ENCODE measurements at regions of chr20 and their contacts with region 1.

Region 1: GRCh38 chr20:5735845-5736525 is 14.2 kb upstream of the SHLD1 start:
- DNase-seq: peak; percentile 49
- ATAC-seq: no peak
- H3K4me3 ChIP-seq: no peak overlapping the region
- H3K27ac ChIP-seq: peak overlapping the region; percentile 88; the same call in 1 of the 2 replicates
- H3K4me1 ChIP-seq: peaks cover 16% of the 10 kb centered on the region
- H3K27me3 ChIP-seq: peaks cover 1% of the 10 kb centered on the region; the same call in 1 of the 2 replicates
- CTCF ChIP-seq: no peak
- POLR2A ChIP-seq: no peak
- RAD21 ChIP-seq: no peak

Region 2: DNA sequence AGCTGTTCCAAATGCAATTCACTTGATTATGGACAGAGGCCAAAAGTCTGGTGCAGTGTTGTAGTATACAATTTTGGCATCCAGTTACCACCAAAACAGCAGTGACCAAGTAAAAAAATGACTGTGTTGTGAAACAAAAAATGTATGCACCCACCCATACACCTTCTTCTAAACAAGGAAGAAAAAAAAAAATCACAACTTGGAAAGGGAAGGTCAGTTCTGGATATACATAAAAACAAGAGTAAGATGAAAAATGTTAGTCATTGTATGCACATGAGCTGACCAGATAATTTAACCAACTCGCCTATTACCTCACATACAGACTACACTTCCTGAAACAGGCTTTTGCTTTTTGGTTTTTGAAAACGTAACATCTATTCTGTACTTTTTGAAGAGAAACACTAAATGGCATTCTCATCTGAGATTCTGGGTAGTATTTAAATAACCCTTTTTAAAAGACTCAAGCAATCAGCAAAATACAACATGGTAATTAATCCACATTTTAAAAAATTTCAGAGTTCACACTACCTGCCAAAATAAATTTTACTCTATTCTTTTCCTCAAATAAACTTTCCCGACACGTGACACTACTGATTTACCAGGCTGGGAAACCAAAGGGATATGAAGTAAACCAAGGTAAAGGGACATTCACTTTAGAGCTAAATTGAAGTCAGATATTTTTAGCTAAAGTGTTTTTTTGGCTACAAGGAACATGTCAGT is 127.4 kb before region 1 on chr20:
- CTCF ChIA-PET with region 1: no interaction called
- POLR2A ChIA-PET with region 1: no interaction called
- dilution Hi-C with region 1: no loop called
- in situ Hi-C with region 1: no loop called
- intact Hi-C with region 1: loop called (anchors 5 kb)
- DNase-seq: peak; percentile 62
- ATAC-seq: no peak
- H3K4me3 ChIP-seq: peak overlapping the region; percentile 93
- H3K27ac ChIP-seq: peak overlapping the region; percentile 3; the same call in 1 of the 2 replicates
- H3K4me1 ChIP-seq: peaks cover 5% of the 10 kb centered on the region; the same call in 1 of the 2 replicates
- H3K27me3 ChIP-seq: no peaks in the 10 kb centered on the region
- CTCF ChIP-seq: no peak
- POLR2A ChIP-seq: peak; percentile 61
- RAD21 ChIP-seq: no peak

Measured in IMR-90 (cell line).